CD4-positive, alpha-beta T cell (primary cell): ENCODE measurements at regions of chr11 and their contacts with region 1.

Region 1: GRCh38 chr11:6377902-6378639 is 12.2 kb upstream of the SMPD1 start:
- DNase-seq: peak in 3 of 14 experiments; percentile 37 to 38 (median 37)
- ATAC-seq: peak; percentile 86
- H3K4me3 ChIP-seq: peak overlapping the region; percentile 8
- H3K4me3 Mint-ChIP-seq: peak overlapping the region; percentile 50
- H3K27ac ChIP-seq: peak overlapping the region; percentile 10 to 40
- H3K27ac Mint-ChIP-seq: peak overlapping the region; percentile 90
- H3K4me1 ChIP-seq: peaks cover 14% of the 10 kb centered on the region
- H3K4me1 Mint-ChIP-seq: peaks cover 33% of the 10 kb centered on the region
- H3K27me3 ChIP-seq: no peaks in the 10 kb centered on the region
- H3K27me3 Mint-ChIP-seq: no peaks in the 10 kb centered on the region
- CTCF ChIP-seq: no peak

Region 2: GRCh38 chr11:6362873-6363678 is 15.0 kb before region 1 on chr11:
- CTCF ChIA-PET with region 1: interaction called, 13 read pairs
- POLR2A ChIA-PET with region 1: interaction called, 6 read pairs
- intact Hi-C with region 1: no loop called
- DNase-seq: peak; percentile 42 to 77 (median 56)
- ATAC-seq: peak; percentile 89
- H3K4me3 ChIP-seq: no peak overlapping the region
- H3K4me3 Mint-ChIP-seq: no peak overlapping the region
- H3K27ac ChIP-seq: no peak overlapping the region
- H3K27ac Mint-ChIP-seq: no peak overlapping the region
- H3K4me1 ChIP-seq: no peaks in the 10 kb centered on the region
- H3K4me1 Mint-ChIP-seq: peaks cover 4% of the 10 kb centered on the region
- H3K27me3 ChIP-seq: peaks cover 0 to 2% of the 10 kb centered on the region in 2 experiments
- H3K27me3 Mint-ChIP-seq: no peaks in the 10 kb centered on the region
- CTCF ChIP-seq: peak; percentile 62

Region 3: DNA sequence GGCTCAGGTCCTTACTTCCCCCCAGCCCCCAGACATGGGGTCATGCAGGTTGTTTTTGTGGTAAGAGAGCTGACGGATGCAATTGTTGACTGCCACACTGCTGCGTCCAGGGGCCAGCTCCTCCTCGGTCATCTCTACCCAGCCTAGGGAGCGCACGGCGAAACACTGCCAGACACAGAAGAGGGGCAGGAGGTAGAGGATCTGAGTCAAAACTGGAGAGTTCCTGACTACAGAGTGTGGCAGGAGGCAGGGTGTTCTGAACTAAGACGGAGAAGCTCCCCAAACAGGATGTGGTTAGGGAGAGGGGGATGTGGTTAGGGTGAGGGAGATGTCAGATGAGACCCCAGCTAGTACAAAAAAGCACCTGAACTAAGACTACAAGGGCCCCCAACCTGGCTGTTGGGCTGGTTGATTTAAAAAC is 24.5 kb after region 1 on chr11:
- CTCF ChIA-PET with region 1: interaction called, 26 read pairs
- POLR2A ChIA-PET with region 1: interaction called, 52 read pairs
- intact Hi-C with region 1: no loop called
- DNase-seq: peak; percentile 43 to 95 (median 72)
- ATAC-seq: peak; percentile 78
- H3K4me3 ChIP-seq: peak overlapping the region; percentile 31
- H3K4me3 Mint-ChIP-seq: peak overlapping the region; percentile 84
- H3K27ac ChIP-seq: peak overlapping the region; percentile 75 to 91
- H3K27ac Mint-ChIP-seq: peak overlapping the region; percentile 97
- H3K4me1 ChIP-seq: peaks cover 83% of the 10 kb centered on the region
- H3K4me1 Mint-ChIP-seq: peaks cover 96% of the 10 kb centered on the region
- H3K27me3 ChIP-seq: no peaks in the 10 kb centered on the region
- H3K27me3 Mint-ChIP-seq: no peaks in the 10 kb centered on the region
- CTCF ChIP-seq: no peak

Region 4: GRCh38 chr11:6419009-6419631 is 41.0 kb after region 1 on chr11 and contains the start of gene APBB1:
- CTCF ChIA-PET with region 1: interaction called, 15 read pairs
- POLR2A ChIA-PET with region 1: interaction called, 63 read pairs
- intact Hi-C with region 1: loop called (anchors 5 kb)
- DNase-seq: peak; percentile 61 to 91 (median 74)
- ATAC-seq: peak; percentile 68
- H3K4me3 ChIP-seq: peak within 1 kb of the TSS; percentile 70
- H3K4me3 Mint-ChIP-seq: peak within 1 kb of the TSS; percentile 91
- H3K27ac ChIP-seq: peak within 1 kb of the TSS; percentile 49 to 92
- H3K27ac Mint-ChIP-seq: peak within 1 kb of the TSS; percentile 89
- H3K4me1 ChIP-seq: peaks cover 49% of the 10 kb centered on the region
- H3K4me1 Mint-ChIP-seq: peaks cover 10% of the 10 kb centered on the region
- H3K27me3 ChIP-seq: no peaks in the 10 kb centered on the region
- H3K27me3 Mint-ChIP-seq: peaks cover 7% of the 10 kb centered on the region
- CTCF ChIP-seq: no peak
- total RNA-seq, gene APBB1: 182 to 184 TPM

Region 5: GRCh38 chr11:6443269-6444003 is 65.4 kb after region 1 on chr11:
- CTCF ChIA-PET with region 1: interaction called, 230 read pairs
- POLR2A ChIA-PET with region 1: interaction called, 55 read pairs
- intact Hi-C with region 1: loop called (anchors 1 kb)
- DNase-seq: peak; percentile 37 to 82 (median 48)
- ATAC-seq: peak; percentile 91
- H3K4me3 ChIP-seq: no peak overlapping the region
- H3K4me3 Mint-ChIP-seq: no peak overlapping the region
- H3K27ac ChIP-seq: no peak overlapping the region
- H3K27ac Mint-ChIP-seq: no peak overlapping the region
- H3K4me1 ChIP-seq: peaks cover 21% of the 10 kb centered on the region
- H3K4me1 Mint-ChIP-seq: no peaks in the 10 kb centered on the region
- H3K27me3 ChIP-seq: no peaks in the 10 kb centered on the region
- H3K27me3 Mint-ChIP-seq: no peaks in the 10 kb centered on the region
- CTCF ChIP-seq: peak; percentile 89

Region 6: DNA sequence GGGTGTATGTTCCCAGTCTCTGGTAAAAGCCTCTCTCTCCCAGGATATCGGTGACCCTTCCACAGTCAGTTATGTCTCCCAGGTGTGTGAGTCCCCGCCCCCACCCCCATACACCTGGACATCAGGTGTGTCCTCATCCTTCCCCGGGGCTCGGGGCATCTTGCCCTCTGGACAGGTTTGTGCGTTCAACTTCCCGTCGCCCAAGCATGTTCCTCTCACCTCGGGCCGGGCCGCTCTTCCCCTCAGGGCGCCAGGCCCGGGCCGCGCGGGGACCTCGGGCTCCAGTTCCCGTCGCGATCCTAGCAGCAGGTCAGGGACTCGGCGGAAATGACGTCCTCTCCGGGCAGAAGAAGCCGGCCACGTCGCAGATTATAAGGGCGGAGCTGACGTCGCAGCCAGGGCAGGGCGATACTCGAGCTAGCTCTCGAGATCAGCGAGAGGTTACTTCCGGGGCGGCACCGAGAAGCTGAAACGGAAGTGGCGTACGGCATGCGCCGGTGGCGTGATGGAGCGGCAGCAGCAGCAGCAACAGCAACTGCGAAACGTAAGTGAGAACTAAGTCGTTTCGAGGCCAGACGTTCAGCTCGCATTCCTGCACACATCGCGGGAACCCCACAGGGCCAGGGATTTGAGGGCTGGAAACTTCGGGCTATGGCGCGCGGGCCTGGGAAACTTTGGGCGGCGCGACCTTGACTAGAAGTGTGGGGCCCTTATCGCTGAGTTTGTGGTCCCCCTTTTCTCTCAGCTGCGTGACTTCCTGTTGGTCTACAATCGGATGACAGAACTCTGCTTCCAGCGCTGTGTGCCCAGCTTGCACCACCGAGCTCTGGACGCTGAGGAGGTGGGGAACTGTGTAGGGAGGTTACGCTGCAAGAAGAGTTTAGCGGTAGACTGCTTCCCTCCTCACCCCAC is 103.2 kb after region 1 on chr11 and contains the starts of genes ARFIP2 and TIMM10B:
- CTCF ChIA-PET with region 1: interaction called, 8 read pairs
- POLR2A ChIA-PET with region 1: interaction called, 19 read pairs
- intact Hi-C with region 1: no loop called
- DNase-seq: peak; percentile 92 to 99 (median 96)
- ATAC-seq: peak; percentile 94
- H3K4me3 ChIP-seq: peak within 1 kb of the TSS; percentile 83
- H3K4me3 Mint-ChIP-seq: peak within 1 kb of the TSS; percentile 98
- H3K27ac ChIP-seq: peak within 1 kb of the TSS; percentile 87 to 95
- H3K27ac Mint-ChIP-seq: peak within 1 kb of the TSS; percentile 99
- H3K4me1 ChIP-seq: peaks cover 39% of the 10 kb centered on the region
- H3K4me1 Mint-ChIP-seq: peaks cover 42% of the 10 kb centered on the region
- H3K27me3 ChIP-seq: no peaks in the 10 kb centered on the region
- H3K27me3 Mint-ChIP-seq: no peaks in the 10 kb centered on the region
- CTCF ChIP-seq: no peak
- total RNA-seq, gene ARFIP2: 78.1 to 80.5 TPM
- total RNA-seq, gene TIMM10B: 68.5 to 68.6 TPM

Region 7: DNA sequence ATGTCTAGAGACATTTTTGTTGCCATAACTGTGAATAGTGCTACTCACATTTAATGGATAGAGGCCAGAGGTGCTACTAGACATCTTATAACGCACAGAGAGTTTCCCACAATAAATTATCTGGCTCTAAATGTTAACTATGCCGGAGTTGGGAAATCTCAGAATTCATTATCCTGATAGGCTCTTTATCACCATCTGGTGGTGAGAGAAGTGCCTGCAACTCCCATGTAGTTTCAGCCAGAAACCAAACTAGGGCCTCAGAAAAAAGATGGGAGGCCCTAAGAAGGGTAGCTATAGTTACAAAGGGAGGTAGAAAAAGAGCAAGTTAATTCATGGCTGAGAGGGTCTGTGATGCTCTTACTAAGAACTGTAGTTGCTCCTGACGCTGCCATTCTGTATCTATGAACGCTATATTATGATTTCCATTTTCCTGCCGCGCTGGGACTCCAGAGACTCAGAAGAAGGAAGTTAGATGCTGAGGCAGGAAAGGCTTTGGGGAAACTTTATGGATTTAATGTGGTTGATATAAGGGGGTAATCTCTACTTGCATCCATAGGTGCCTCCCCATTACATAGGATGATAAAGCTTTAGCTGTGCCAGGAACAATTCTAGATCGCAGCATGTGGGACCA is 327.9 kb after region 1 on chr11:
- CTCF ChIA-PET with region 1: no interaction called
- POLR2A ChIA-PET with region 1: no interaction called
- intact Hi-C with region 1: loop called in 1 of 2 experiments (anchors 1 kb)
- DNase-seq: peak in 11 of 14 experiments; percentile 11 to 72 (median 21)
- ATAC-seq: peak; percentile 88
- H3K4me3 ChIP-seq: no peak overlapping the region
- H3K4me3 Mint-ChIP-seq: no peak overlapping the region
- H3K27ac ChIP-seq: no peak overlapping the region
- H3K27ac Mint-ChIP-seq: peak overlapping the region; percentile 78
- H3K4me1 ChIP-seq: no peaks in the 10 kb centered on the region
- H3K4me1 Mint-ChIP-seq: peaks cover 30% of the 10 kb centered on the region
- H3K27me3 ChIP-seq: no peaks in the 10 kb centered on the region
- H3K27me3 Mint-ChIP-seq: no peaks in the 10 kb centered on the region
- CTCF ChIP-seq: peak; percentile 99